ENCODE measurements at regions of chr17 and their contacts with region 1.

Region 1: DNA sequence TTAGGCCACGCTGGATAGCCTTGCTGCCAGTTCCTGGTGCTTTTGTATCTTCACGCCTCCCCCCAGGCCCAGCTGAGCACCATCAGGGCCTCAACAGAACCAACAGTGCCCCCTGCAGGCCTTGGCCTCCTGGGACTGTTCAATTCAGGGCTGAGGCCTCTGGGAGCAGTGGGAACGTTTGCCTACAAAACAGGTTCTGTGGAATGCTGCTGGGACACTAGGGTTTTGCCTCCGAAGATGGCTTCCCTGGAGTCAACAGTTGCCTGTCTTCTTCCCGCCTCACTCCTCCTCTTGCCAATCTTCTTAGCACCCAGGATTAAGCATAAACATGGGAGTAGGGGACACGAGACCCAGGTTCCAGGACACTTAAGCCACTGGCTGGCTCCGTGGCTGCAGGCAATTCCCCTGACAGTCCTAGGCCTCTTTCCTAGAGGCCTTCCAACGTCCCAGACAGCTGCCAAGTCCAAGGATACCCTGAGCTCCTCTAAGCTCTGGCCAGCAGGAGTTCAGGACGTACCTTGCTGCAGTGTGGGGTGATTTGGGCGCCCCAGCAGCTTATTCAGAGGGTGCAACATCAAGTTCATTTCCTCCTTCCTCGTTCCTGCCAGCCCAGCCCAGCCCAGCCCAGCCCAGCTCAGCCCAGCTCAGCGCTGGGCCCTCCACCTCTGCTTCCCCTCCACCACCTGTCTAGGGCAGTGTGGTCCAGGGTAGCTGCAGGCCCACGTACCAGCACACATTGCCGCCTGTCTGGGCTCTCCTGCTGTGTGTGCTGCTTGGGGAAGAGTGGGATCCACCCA is 246.6 kb upstream of the RPL38 start:
- DNase-seq: peak; percentile 17 to 41
- ATAC-seq: peak in 3 of 8 donors; percentile 25 to 45 (median 30)
- H3K4me3 ChIP-seq: no peak overlapping the region
- H3K27ac ChIP-seq: no peak overlapping the region
- H3K4me1 ChIP-seq: peaks cover 6 to 12% (median 11%) of the 10 kb centered on the region in 9 donors
- H3K27me3 ChIP-seq: peaks cover 0 to 41% (median 20%) of the 10 kb centered on the region in 7 donors
- CTCF ChIP-seq: peak in 7 of 9 donors; percentile 45 to 58 (median 52)

Region 2: GRCh38 chr17:73645050-73645978 is 311.6 kb before region 1 on chr17:
- intact Hi-C with region 1: loop called in 6 of 10 experiments (anchors 5 to 10 kb)
- DNase-seq: peak; percentile 31 to 54
- ATAC-seq: peak; percentile 60 to 83 (median 76)
- H3K4me3 ChIP-seq: peak overlapping the region in 9 of 10 donors; percentile 42 to 66 (median 55)
- H3K27ac ChIP-seq: peak overlapping the region in 5 of 10 donors; percentile 1 to 60 (median 40)
- H3K4me1 ChIP-seq: peaks cover 0 to 31% (median 20%) of the 10 kb centered on the region in 9 donors
- H3K27me3 ChIP-seq: peaks cover 0 to 92% (median 70%) of the 10 kb centered on the region in 7 donors
- CTCF ChIP-seq: peak in 5 of 9 donors; percentile 6 to 31 (median 20)

Measured in heart right ventricle (tissue), 16 donors.